Thyroid gland (tissue), 4 donors: ENCODE measurements at regions of chr22 and their contacts with region 1.

Region 1: DNA sequence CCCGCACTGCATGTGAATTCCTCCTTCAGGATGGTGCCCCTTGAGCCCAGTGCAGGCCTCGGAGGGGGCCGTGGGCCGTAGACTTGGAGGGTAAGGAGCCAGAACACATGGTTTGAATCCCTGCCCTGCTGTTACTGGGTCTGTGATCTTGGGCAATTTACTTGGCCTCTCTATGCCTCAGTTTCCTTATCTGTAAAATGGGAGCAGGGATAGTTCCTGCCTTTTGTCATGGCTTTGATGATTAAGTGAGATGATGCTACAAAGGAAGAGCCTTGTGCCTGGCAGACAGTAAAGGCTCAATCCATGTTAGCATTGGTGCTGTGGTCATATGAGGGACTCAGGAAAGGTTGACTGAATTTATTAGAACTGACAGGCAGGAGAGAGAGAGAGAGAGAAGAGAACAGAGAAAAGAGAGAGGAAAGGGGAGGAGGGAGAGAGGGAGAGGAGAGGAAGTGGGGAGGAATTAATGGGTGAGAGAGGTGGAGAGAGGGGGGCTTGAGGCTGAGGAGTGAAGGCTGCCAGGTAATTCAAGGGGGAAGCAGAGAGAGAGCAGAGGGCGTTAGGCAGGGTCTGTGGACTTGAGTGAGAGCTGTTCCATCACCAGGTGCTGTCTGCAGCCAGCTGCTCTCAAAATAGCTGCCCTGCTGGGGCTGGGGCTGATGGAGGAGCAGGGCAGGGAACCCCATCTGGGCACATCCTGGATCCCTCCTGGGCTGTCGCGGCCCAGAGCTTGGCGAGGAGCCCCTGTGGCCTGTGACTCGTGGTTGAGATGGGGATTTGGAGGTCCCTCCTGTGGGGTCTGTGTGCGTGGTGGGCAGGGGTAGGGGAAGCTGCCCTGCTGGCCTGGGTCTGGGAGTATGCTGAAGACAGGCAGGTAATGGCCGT is 44.1 kb downstream of the MCM5 start:
- DNase-seq: no peak
- H3K4me3 ChIP-seq: no peak overlapping the region
- H3K27ac ChIP-seq: no peak overlapping the region
- H3K4me1 ChIP-seq: no peaks in the 10 kb centered on the region
- H3K27me3 ChIP-seq: no peaks in the 10 kb centered on the region
- CTCF ChIP-seq: no peak
- POLR2A ChIP-seq: no peak

Region 2: DNA sequence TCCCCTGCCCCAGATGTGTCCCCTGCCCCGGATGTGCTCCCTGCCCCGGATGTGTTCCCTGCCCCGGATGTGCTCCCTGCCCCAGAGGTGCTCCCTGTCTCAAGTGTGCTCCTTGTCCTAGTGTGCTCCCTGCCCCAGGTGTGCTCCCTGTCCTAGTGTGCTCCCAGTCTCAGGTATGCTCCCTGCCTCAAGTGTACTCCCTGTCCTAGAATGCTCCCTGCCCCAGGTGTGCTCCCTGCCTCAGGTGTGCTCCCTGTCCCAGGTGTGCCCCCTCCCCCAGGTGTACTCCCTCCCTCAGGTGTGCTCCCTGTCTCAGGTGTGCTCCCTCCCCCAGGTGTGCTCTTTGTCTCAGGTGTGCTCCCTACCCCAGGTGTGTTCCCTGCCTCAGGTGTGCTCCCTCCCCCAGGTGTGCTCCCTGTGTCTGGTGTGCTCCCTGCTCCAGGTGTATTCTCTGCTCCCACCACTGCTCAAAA is 47.9 kb after region 1 on chr22:
- intact Hi-C with region 1: loop called (anchors 5 kb)
- DNase-seq: no peak
- H3K4me3 ChIP-seq: no peak overlapping the region
- H3K27ac ChIP-seq: no peak overlapping the region
- H3K4me1 ChIP-seq: peaks cover under 1 to 3% of the 10 kb centered on the region in 2 donors
- H3K27me3 ChIP-seq: no peaks in the 10 kb centered on the region
- CTCF ChIP-seq: no peak
- POLR2A ChIP-seq: no peak

Region 3: GRCh38 chr22:35539910-35540594 is 96.0 kb after region 1 on chr22:
- intact Hi-C with region 1: no loop called
- DNase-seq: peak; percentile 64 to 66
- H3K4me3 ChIP-seq: peak overlapping the region in 2 of 3 donors; percentile 42 to 55
- H3K27ac ChIP-seq: peak overlapping the region in 2 of 3 donors; percentile 52 to 58
- H3K4me1 ChIP-seq: peaks cover 17 to 24% of the 10 kb centered on the region in 2 donors
- H3K27me3 ChIP-seq: no peaks in the 10 kb centered on the region
- CTCF ChIP-seq: no peak
- POLR2A ChIP-seq: peak in 1 of 2 donors; percentile 18